Heart right ventricle (tissue), 16 donors: ENCODE measurements at regions of chr13 and their contacts with region 1.

Region 1: DNA sequence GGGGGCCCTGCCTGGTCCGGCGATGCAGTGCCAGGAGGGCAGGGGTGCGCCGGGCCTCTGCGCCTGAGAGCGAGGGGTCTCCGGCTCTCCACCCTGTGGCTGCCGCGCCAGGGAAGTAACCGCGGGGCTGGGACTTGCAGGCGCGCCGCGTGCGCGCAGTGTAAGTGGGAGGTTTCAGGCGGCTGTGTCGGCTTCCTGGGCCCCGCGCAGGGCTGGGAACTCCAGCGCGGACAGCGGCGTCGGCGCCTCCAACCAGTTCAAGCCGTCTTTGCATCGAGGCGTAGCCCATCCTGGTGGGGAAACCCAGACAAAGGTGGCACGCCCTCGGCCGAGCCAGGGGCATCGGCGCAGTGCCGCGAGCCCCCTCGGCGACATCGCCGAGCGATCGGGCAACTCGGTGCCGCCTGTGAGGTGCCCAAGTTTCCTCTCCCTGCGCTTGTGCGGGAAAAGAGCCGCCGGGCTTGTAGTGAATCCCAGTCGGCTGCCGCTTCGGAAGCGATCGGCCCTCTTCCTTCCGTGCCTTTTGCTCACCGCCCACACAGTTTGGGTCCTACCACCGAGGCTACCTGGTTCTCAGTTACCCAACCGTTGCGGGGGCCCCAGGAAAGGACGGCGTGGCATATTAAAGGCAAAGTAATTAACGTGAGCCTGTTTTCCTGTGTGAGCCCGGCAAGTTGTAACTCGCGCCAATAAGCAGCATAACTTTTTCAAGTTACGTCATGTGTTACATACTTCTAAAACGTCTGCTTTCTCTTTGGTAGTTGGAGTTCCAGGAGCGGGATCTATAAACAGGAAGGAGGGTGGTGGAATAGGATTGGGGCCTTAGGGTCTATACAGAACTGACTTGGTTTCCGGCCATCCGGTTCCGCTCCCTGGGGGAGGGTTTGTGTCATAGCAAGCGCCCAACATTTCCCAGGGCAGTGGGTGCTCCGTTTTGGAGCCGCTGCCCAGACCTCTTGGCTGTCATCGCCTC is 1.2 kb downstream of the LRCH1 start:
- DNase-seq: peak; percentile 74 to 79
- ATAC-seq: peak; percentile 64 to 88 (median 71)
- H3K4me3 ChIP-seq: peak overlapping the region; percentile 73 to 100 (median 94)
- H3K27ac ChIP-seq: peak overlapping the region; percentile 90 to 98 (median 92)
- H3K4me1 ChIP-seq: peaks cover 0 to 53% (median 36%) of the 10 kb centered on the region in 9 donors
- H3K27me3 ChIP-seq: no peaks in the 10 kb centered on the region
- CTCF ChIP-seq: peak in 6 of 9 donors; percentile 24 to 42 (median 33)

Region 2: GRCh38 chr13:45909673-45910072 is 644.5 kb before region 1 on chr13:
- intact Hi-C with region 1: no loop called
- DNase-seq: no peak
- ATAC-seq: no peak
- H3K4me3 ChIP-seq: no peak overlapping the region
- H3K27ac ChIP-seq: no peak overlapping the region
- H3K4me1 ChIP-seq: no peaks in the 10 kb centered on the region
- H3K27me3 ChIP-seq: peaks cover 0 to 13% (median 4%) of the 10 kb centered on the region in 7 donors
- CTCF ChIP-seq: no peak

Region 3: GRCh38 chr13:46403851-46404732 is 150.1 kb before region 1 on chr13:
- intact Hi-C with region 1: no loop called
- DNase-seq: no peak
- ATAC-seq: peak in 6 of 8 donors; percentile 28 to 75 (median 70)
- H3K4me3 ChIP-seq: no peak overlapping the region
- H3K27ac ChIP-seq: peak overlapping the region in 2 of 10 donors; percentile 34 to 89
- H3K4me1 ChIP-seq: peaks cover 0 to 48% (median 0%) of the 10 kb centered on the region in 9 donors
- H3K27me3 ChIP-seq: peaks cover 0 to 6% (median 0%) of the 10 kb centered on the region in 7 donors
- CTCF ChIP-seq: no peak

Region 4: GRCh38 chr13:46492946-46493345 is 61.2 kb before region 1 on chr13:
- intact Hi-C with region 1: loop called in 8 of 10 experiments (anchors 5 to 10 kb)
- DNase-seq: peak in 1 of 2 donors; percentile 29
- ATAC-seq: peak in 1 of 8 donors; percentile 42
- H3K4me3 ChIP-seq: no peak overlapping the region
- H3K27ac ChIP-seq: no peak overlapping the region
- H3K4me1 ChIP-seq: peaks cover 0 to 14% (median 0%) of the 10 kb centered on the region in 9 donors
- H3K27me3 ChIP-seq: peaks cover 0 to 3% (median 0%) of the 10 kb centered on the region in 7 donors
- CTCF ChIP-seq: peak; percentile 36 to 82 (median 67)

Region 5: GRCh38 chr13:46595136-46595886 is 41.1 kb after region 1 on chr13:
- intact Hi-C with region 1: loop called in 6 of 10 experiments (anchors 5 to 10 kb)
- DNase-seq: no peak
- ATAC-seq: peak in 6 of 8 donors; percentile 39 to 89 (median 43)
- H3K4me3 ChIP-seq: no peak overlapping the region
- H3K27ac ChIP-seq: peak overlapping the region in 8 of 10 donors; percentile 5 to 79 (median 38)
- H3K4me1 ChIP-seq: peaks cover 0 to 97% (median 63%) of the 10 kb centered on the region in 9 donors
- H3K27me3 ChIP-seq: no peaks in the 10 kb centered on the region
- CTCF ChIP-seq: no peak

Region 6: DNA sequence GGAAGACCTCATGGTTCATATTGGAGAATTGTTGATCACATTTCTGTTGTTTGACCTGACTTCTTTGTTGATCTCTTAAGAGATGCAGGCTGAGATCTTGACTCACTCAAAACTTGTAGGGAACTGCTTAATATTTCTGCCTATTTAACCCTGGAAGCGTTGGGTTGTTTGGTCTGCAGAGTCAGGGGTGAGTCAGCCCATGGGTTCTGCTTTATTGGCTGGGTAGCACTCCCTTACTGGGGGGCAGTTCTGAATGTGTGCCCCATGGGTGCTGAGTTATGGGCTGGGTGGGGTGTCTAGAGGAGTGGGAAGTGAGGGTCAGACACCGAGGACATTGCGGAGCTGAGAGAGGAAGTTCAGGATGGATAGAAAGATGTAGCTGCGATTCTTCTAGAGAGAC is 86.7 kb after region 1 on chr13:
- intact Hi-C with region 1: loop called in 2 of 10 experiments (anchors 5 kb)
- DNase-seq: no peak
- ATAC-seq: peak in 3 of 8 donors; percentile 12 to 46 (median 32)
- H3K4me3 ChIP-seq: no peak overlapping the region
- H3K27ac ChIP-seq: peak overlapping the region in 9 of 10 donors; percentile 22 to 81 (median 54)
- H3K4me1 ChIP-seq: peaks cover 42 to 98% (median 69%) of the 10 kb centered on the region in 9 donors
- H3K27me3 ChIP-seq: no peaks in the 10 kb centered on the region
- CTCF ChIP-seq: no peak

Region 7: GRCh38 chr13:46698910-46699460 is 144.8 kb after region 1 on chr13:
- intact Hi-C with region 1: loop called in 6 of 10 experiments (anchors 5 to 10 kb)
- DNase-seq: no peak
- ATAC-seq: peak in 7 of 8 donors; percentile 23 to 76 (median 65)
- H3K4me3 ChIP-seq: no peak overlapping the region
- H3K27ac ChIP-seq: peak overlapping the region in 5 of 10 donors; percentile 9 to 36 (median 23)
- H3K4me1 ChIP-seq: peaks cover 0 to 28% (median 15%) of the 10 kb centered on the region in 9 donors
- H3K27me3 ChIP-seq: no peaks in the 10 kb centered on the region
- CTCF ChIP-seq: no peak